Heart right ventricle (tissue), 16 donors: ENCODE measurements at regions of chr7 and their contacts with region 1.

Region 1: DNA sequence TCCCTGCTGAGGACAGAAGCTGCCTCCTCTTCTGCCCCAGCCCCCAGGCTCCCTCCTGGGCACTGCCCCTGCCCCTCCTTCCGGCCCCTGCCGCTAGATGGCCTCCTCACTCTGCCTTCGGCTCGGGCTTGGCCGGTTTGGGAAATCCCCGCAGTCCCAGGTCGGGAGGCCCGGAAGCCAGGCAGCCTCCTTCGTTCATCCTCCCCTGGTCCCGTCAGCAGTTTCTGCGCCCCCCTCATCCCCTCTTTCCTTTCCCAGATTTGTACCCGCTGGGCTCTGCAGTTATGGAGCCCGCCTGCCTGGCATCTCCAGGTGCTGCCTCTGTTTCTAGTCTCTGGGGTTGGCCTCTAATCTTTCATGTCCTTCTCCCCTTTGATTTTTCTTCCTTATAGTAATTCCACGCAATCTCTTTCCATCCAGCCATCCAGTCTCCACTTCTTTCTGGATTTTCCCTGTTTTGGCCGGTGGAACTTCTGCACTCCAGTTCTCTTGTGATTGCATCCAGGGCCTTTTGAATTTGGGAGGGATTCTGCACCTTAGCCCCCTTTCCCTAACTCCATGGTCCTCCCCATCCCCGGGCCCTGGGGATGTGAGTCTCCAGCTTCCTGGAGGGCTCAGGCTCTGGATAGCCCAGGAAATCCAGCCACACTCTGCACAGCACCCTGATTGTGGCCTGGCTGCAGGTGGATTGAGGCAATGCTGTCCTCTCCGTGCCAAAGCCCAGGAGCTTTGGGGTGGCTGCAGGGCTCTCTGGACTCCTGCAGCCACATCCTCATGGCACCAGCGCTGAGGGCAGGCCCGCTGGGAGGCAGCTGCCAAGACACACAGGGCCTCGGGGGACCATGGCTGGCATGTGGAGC is 3.3 kb upstream of the SHH start:
- DNase-seq: peak; percentile 18 to 44
- ATAC-seq: peak in 7 of 8 donors; percentile 22 to 79 (median 74)
- H3K4me3 ChIP-seq: no peak overlapping the region
- H3K27ac ChIP-seq: no peak overlapping the region
- H3K4me1 ChIP-seq: peaks cover 0 to 16% (median 4%) of the 10 kb centered on the region in 9 donors
- H3K27me3 ChIP-seq: peaks cover 2 to 95% (median 87%) of the 10 kb centered on the region in 7 donors
- CTCF ChIP-seq: peak in 7 of 9 donors; percentile 51 to 65 (median 59)

Region 2: DNA sequence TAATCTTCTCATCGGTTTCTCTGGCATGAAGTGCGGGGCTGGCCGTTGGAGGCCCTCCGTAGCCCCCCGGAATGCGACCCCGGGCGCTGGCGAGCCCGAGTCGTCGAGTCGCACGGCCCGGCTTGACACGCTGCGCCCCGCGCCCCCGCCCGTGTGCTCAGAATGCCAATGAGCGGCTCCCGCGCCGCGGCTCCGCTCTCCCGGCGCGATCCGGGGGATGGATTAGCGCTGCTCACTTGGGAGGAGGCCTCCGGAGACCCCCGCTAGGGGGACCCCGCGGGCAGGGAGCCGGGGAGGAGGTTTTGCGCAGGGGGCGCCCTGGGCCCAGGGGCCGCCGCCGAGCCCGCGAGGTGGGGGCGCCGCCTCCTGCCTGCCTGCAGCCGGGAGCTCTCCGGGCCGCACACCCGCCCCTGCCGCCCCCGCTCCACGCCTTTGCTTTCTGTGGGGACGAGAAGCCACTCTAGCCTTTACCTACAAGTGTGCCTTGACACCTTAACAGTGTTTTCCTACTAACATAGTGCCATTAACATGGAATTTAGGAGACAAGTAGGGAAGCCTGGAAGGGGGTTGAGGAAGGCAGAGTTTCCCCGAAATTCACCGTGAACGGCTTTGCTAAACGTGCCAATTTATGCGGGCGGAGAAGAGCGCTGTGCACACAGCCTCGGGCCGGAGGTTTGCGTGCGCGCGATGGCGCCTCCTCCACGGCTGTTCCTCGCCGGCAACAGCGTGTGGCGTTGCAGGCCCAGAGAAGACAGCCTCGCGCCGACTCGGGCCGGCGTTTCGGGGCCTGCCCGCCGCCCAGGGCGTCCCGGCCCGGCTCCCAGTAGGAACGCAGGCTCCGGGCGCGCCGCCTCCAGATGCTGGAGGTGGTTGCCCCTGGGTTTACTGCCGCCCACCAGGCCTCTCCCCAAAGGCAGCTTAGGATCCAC is 10.4 kb before region 1 on chr7:
- intact Hi-C with region 1: no loop called
- DNase-seq: peak in 1 of 2 donors; percentile 32
- ATAC-seq: peak; percentile 51 to 77 (median 74)
- H3K4me3 ChIP-seq: peak overlapping the region; percentile 11 to 51 (median 36)
- H3K27ac ChIP-seq: no peak overlapping the region
- H3K4me1 ChIP-seq: peaks cover 10 to 62% (median 51%) of the 10 kb centered on the region in 9 donors
- H3K27me3 ChIP-seq: peaks cover 56 to 100% (median 100%) of the 10 kb centered on the region in 7 donors
- CTCF ChIP-seq: peak in 7 of 9 donors; percentile 36 to 66 (median 44)

Region 3: GRCh38 chr7:156764016-156764669 is 948.6 kb after region 1 on chr7:
- intact Hi-C with region 1: loop called in 2 of 10 experiments (anchors 10 kb)
- DNase-seq: peak; percentile 56 to 58
- ATAC-seq: peak; percentile 86 to 97 (median 92)
- H3K4me3 ChIP-seq: no peak overlapping the region
- H3K27ac ChIP-seq: no peak overlapping the region
- H3K4me1 ChIP-seq: peaks cover 0 to 5% (median 0%) of the 10 kb centered on the region in 9 donors
- H3K27me3 ChIP-seq: no peaks in the 10 kb centered on the region
- CTCF ChIP-seq: peak; percentile 33 to 81 (median 65)